ENCODE measurements at regions of chr7 and their contacts with region 1.

Region 1: DNA sequence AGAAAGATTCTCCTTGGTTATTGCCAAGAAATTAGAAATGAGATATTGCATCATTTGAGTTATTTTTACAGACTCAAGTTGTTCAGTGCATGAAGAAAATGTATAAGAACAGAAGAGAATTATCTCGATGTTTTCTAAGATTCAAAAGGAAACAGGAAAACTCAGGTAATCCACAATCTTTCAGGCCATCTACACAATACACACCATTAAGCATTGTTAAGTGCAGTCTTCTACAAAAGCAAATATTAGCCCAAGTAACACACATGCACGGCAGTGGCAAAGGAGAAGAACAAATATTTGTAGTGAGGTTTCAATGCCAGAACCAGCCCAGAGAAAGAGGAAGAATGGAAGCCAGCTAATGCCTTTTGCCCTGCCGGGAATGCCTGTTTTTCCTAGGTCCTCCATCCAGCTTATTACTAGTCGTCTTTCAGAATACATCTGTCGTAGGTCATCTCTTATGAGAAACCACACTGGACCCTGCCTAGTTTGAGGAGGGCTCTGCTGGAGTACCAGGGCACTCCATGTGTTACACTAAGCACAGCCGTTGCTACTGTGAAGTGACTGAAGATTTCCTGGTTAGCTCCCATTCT is 67.5 kb upstream of the C1GALT1 start:
- DNase-seq: no peak
- ATAC-seq: no peak
- H3K4me3 ChIP-seq: no peak overlapping the region
- H3K4me3 Mint-ChIP-seq: no peak overlapping the region
- H3K27ac ChIP-seq: no peak overlapping the region
- H3K27ac Mint-ChIP-seq: no peak overlapping the region
- H3K4me1 ChIP-seq: no peaks in the 10 kb centered on the region
- H3K4me1 Mint-ChIP-seq: peaks cover 1% of the 10 kb centered on the region
- H3K27me3 ChIP-seq: no peaks in the 10 kb centered on the region
- H3K27me3 Mint-ChIP-seq: no peaks in the 10 kb centered on the region
- CTCF ChIP-seq: no peak

Region 2: GRCh38 chr7:7151285-7151684 is 36.5 kb after region 1 on chr7:
- CTCF ChIA-PET with region 1: no interaction called
- POLR2A ChIA-PET with region 1: no interaction called
- intact Hi-C with region 1: loop called in 1 of 2 experiments (anchors 5 kb)
- DNase-seq: no peak
- ATAC-seq: no peak
- H3K4me3 ChIP-seq: no peak overlapping the region
- H3K4me3 Mint-ChIP-seq: no peak overlapping the region
- H3K27ac ChIP-seq: no peak overlapping the region
- H3K27ac Mint-ChIP-seq: no peak overlapping the region
- H3K4me1 ChIP-seq: peaks cover 22% of the 10 kb centered on the region
- H3K4me1 Mint-ChIP-seq: peaks cover 38% of the 10 kb centered on the region
- H3K27me3 ChIP-seq: no peaks in the 10 kb centered on the region
- H3K27me3 Mint-ChIP-seq: no peaks in the 10 kb centered on the region
- CTCF ChIP-seq: no peak

Region 3: DNA sequence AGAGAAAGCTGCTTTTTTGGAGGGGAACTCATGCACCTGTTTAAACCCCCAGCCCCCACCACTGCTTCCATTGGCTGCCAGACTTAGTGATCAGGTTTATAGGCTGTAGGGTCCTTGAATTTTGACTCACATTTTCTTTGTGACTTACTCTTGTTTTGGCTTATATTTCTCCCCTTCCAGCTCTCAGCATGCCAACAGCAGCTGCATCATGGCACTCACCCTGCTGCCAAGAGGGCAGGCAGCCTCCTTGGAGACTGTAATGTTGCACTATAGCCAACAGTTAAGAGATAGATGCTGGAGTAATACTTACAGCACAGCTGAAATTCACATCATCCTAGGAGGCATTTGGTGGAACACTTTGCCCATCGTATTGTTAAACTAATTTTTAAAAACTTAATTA is 755.8 kb after region 1 on chr7:
- CTCF ChIA-PET with region 1: no interaction called
- POLR2A ChIA-PET with region 1: no interaction called
- intact Hi-C with region 1: no loop called
- DNase-seq: no peak
- ATAC-seq: no peak
- H3K4me3 ChIP-seq: no peak overlapping the region
- H3K4me3 Mint-ChIP-seq: no peak overlapping the region
- H3K27ac ChIP-seq: no peak overlapping the region
- H3K27ac Mint-ChIP-seq: no peak overlapping the region
- H3K4me1 ChIP-seq: no peaks in the 10 kb centered on the region
- H3K4me1 Mint-ChIP-seq: no peaks in the 10 kb centered on the region
- H3K27me3 ChIP-seq: no peaks in the 10 kb centered on the region
- H3K27me3 Mint-ChIP-seq: no peaks in the 10 kb centered on the region
- CTCF ChIP-seq: no peak

Measured in CD8-positive, alpha-beta T cell (primary cell).